ENCODE measurements at regions of chr13 and their contacts with region 1.

Region 1: DNA sequence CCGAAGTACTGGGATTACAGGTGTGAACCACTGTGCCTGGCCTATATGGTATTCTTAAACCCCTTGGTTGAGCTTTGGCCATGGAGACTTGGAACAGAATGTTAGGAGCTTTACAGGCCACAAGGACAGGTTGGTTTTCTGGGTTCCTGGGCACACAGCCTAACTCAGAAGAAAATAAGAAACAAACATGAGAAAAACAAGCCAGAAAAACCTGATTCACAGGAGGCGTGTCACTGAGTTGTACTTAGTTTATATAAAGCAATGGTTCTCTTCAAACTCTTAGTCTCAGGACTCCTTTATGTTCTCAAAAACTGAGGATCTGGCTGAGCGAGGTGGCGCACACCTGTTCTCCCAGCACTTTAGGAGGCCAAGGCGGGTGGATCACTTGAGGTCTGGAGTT is 125.1 kb upstream of the SPATA13 start:
- DNase-seq: no peak
- H3K4me3 Mint-ChIP-seq: no peak overlapping the region
- H3K27ac Mint-ChIP-seq: no peak overlapping the region
- H3K4me1 Mint-ChIP-seq: peaks cover 5% of the 10 kb centered on the region
- H3K27me3 Mint-ChIP-seq: peaks cover 22% of the 10 kb centered on the region
- CTCF ChIP-seq: no peak

Region 2: DNA sequence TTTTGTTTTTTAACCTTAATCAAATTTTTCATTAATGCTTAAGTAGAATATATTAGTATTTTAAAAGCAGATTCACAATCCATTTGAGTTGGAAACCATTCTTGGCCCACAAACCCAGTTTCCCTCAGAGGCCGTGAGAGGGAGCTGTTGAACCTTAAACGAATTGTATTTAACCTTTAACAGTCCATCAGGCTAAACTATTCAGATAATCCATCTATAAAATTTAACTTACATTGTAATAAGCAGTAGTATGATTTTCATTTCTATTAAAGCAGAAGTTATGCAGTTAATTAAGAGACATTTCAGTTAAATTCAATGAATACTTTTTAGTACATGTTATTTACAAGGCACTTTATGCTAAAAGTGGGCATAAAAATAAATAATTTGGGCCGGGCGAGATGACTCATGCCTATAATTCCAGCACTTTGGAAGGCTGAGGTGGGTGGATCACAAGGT is 15.0 kb before region 1 on chr13:
- CTCF ChIA-PET with region 1: interaction called, 10 read pairs
- POLR2A ChIA-PET with region 1: interaction called, 3 read pairs
- intact Hi-C with region 1: no loop called
- DNase-seq: peak; percentile 73
- H3K4me3 Mint-ChIP-seq: no peak overlapping the region
- H3K27ac Mint-ChIP-seq: no peak overlapping the region
- H3K4me1 Mint-ChIP-seq: no peaks in the 10 kb centered on the region
- H3K27me3 Mint-ChIP-seq: no peaks in the 10 kb centered on the region
- CTCF ChIP-seq: peak; percentile 57

Region 3: DNA sequence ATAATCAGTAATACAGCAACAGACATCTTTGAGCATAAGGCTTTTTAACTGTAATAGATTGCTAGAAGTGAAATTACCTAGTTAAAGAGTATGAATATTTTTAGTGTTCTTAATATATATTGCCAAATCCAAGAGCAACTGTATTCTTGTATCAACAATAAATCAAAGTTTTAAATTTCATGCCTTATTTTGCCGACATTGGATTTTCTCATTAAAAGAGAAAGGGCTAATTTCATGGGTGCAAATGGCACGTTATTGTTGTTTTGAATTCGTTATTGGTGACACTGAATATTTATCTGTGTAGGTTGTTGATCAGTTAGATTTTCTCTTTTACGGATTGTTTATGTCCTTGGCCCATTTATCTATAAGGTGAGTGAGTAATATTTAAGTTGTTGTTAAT is 371.1 kb after region 1 on chr13:
- CTCF ChIA-PET with region 1: no interaction called
- POLR2A ChIA-PET with region 1: no interaction called
- intact Hi-C with region 1: no loop called
- DNase-seq: no peak
- H3K4me3 Mint-ChIP-seq: no peak overlapping the region
- H3K27ac Mint-ChIP-seq: no peak overlapping the region
- H3K4me1 Mint-ChIP-seq: no peaks in the 10 kb centered on the region
- H3K27me3 Mint-ChIP-seq: peaks cover 63% of the 10 kb centered on the region
- CTCF ChIP-seq: no peak

Measured in MCF 10A (cell line).